Heart right ventricle (tissue), 16 donors: ENCODE measurements at regions of chr18 and their contacts with region 1.

Region 1: DNA sequence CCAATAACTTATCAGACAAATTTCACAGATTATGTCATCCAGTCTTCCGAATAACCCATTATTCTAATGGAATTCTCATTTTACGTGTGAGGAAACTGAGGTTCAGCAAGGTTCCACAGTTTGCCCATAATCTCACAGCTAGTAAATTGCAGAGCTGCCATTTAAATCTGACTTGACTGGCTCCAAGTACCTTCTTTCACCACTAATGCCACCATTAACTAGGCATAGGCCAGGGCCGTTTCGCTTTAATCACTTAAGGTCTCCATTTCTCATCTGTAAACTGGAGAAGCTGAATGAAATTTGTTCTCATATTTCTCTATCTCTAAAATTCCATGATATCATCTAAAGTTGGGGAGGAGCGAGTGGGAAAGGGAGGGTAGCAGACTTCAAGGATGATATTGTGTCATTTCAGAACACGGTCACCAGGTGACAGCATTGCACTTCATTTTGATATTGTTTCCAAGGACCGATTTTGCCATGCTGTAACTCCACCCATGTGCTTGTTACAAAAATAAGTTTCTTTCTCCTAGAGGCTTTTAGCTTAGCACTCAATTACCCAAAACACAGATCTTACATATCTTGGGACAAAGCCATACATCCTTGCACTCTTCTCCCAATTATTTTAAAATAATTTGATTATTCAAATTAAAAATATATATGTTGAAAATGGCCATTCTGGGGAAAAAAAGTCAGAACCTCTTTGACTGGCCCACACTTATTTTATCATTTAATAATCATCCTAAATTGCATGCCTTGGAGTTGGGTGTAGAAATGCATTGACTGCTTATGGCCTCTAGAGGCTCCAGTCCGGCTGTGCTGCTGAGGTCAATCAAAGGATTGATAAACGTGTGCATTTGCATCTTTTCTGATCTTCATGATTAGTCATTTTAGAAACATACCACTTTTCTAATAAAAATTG is 123.8 kb downstream of the AKAIN1 start:
- DNase-seq: peak in 1 of 2 donors; percentile 6
- ATAC-seq: peak in 6 of 8 donors; percentile 39 to 71 (median 64)
- H3K4me3 ChIP-seq: no peak overlapping the region
- H3K27ac ChIP-seq: no peak overlapping the region
- H3K4me1 ChIP-seq: peaks cover 0 to 4% (median 0%) of the 10 kb centered on the region in 9 donors
- H3K27me3 ChIP-seq: peaks cover 0 to 23% (median 7%) of the 10 kb centered on the region in 7 donors
- CTCF ChIP-seq: peak; percentile 19 to 68 (median 55)

Region 2: DNA sequence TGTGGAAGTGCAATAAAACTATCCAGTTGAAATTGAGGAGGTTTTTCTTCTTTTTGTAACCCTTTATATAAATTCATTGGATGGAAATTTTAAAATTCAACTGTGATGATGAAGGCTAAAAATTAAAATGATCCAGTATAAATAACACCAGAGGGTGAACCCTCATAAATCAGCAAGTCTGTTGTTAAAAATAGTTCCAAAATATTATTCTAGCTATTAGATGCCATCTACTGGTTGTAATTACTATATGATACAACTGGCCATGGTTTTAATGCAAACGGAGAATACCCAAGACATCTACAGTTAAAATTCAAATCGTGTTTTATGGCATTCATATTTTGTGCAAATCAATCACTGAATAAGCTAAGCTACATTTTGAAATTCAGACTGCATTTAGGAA is 768.2 kb after region 1 on chr18:
- intact Hi-C with region 1: loop called in 1 of 10 experiments (anchors 10 kb)
- DNase-seq: no peak
- ATAC-seq: no peak
- H3K4me3 ChIP-seq: no peak overlapping the region
- H3K27ac ChIP-seq: no peak overlapping the region
- H3K4me1 ChIP-seq: no peaks in the 10 kb centered on the region
- H3K27me3 ChIP-seq: peaks cover 0 to 20% (median 7%) of the 10 kb centered on the region in 7 donors
- CTCF ChIP-seq: peak in 4 of 9 donors; percentile 19 to 36 (median 31)